CD4-positive, alpha-beta memory T cell (primary cell): ENCODE measurements at regions of chr3 and their contacts with region 1.

Region 1: DNA sequence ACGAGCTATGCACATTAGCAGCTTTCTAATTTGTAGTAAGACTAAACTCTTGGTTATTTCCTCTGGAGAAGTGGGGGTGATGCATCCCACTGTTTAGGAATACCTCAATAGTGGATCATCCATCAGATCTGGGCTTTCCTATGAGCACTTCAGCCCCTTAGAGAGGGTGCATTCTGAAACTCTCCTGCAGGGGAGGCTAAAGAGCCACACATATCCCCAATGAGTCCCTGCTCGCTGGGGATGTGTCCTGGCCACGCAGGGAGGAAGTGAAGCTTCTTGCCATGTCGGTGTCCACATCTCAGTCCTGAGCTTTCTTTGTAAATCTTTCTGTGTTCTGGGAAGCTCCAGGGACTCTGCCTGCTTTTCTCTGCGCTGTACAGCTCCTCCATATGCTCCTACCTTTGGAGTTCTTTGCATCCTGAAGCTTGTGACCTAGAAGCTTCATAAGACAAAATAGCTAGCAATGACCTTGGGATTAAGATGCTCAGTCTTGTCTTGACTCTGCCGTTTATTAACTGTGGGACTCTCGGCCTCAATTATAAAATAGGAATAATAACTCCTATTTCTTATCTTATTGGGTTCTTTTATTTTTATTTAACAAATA is 28.3 kb upstream of the MASP1 start:
- DNase-seq: peak; percentile 35 to 56 (median 44)
- H3K4me3 ChIP-seq: no peak overlapping the region
- H3K4me3 Mint-ChIP-seq: peak overlapping the region in 1 of 8 donors; percentile 36
- H3K27ac ChIP-seq: no peak overlapping the region
- H3K27ac Mint-ChIP-seq: no peak overlapping the region
- H3K4me1 ChIP-seq: peaks cover 15% of the 10 kb centered on the region
- H3K4me1 Mint-ChIP-seq: peaks cover 9 to 17% (median 14%) of the 10 kb centered on the region in 4 donors
- H3K27me3 ChIP-seq: no peaks in the 10 kb centered on the region
- H3K27me3 Mint-ChIP-seq: peaks cover 21 to 35% of the 10 kb centered on the region in 2 donors

Region 2: GRCh38 chr3:186452517-186452916 is 867.3 kb before region 1 on chr3:
- CTCF ChIA-PET with region 1: no interaction called
- POLR2A ChIA-PET with region 1: no interaction called
- intact Hi-C with region 1: no loop called
- DNase-seq: no peak
- H3K4me3 ChIP-seq: no peak overlapping the region
- H3K4me3 Mint-ChIP-seq: no peak overlapping the region
- H3K27ac ChIP-seq: no peak overlapping the region
- H3K27ac Mint-ChIP-seq: peak overlapping the region in 1 of 7 donors; percentile 11
- H3K4me1 ChIP-seq: no peaks in the 10 kb centered on the region
- H3K4me1 Mint-ChIP-seq: no peaks in the 10 kb centered on the region
- H3K27me3 ChIP-seq: no peaks in the 10 kb centered on the region
- H3K27me3 Mint-ChIP-seq: peaks cover 2% of the 10 kb centered on the region in 2 donors

Region 3: DNA sequence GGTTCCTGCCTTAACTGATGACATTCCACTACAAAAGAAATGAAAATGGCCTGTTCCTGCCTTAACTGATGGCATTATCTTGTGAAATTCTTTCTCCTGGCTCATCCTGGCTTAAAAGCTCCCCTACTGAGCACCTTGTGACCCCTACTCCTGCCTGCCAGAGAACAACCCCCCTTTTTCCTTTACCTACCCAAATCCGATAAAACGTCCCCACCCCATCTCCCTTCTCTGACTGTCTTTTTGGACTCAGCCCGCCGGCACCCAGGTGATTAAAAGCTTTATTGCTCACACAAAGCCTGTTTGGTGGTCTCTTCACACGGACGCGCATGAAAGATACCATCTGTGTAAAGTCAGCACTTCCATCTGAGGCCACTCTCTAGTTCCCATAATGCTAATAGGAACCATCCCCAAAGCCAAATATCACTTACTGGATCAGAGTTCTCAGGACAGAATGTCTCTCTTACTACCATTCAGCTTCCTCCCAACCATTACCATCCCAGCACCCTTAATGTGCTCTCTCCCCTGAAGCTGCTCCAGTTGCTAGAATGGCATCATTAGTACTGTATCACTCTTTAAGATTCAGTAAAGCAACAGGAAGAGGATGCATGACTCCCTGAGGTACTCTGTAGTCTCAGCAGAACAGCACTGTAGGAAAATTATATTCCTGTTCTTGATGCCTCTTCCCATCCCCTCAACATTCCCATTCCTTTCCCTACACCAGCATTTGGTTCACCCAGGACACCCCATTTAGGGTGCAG is 656.3 kb before region 1 on chr3:
- CTCF ChIA-PET with region 1: no interaction called
- POLR2A ChIA-PET with region 1: no interaction called
- intact Hi-C with region 1: no loop called
- DNase-seq: no peak
- H3K4me3 ChIP-seq: no peak overlapping the region
- H3K4me3 Mint-ChIP-seq: no peak overlapping the region
- H3K27ac ChIP-seq: no peak overlapping the region
- H3K27ac Mint-ChIP-seq: no peak overlapping the region
- H3K4me1 ChIP-seq: no peaks in the 10 kb centered on the region
- H3K4me1 Mint-ChIP-seq: peaks cover 0 to 3% (median 0%) of the 10 kb centered on the region in 4 donors
- H3K27me3 ChIP-seq: peaks cover 3% of the 10 kb centered on the region
- H3K27me3 Mint-ChIP-seq: peaks cover 11 to 28% of the 10 kb centered on the region in 2 donors

Region 4: GRCh38 chr3:187112934-187113793 is 206.6 kb before region 1 on chr3:
- CTCF ChIA-PET with region 1: no interaction called
- POLR2A ChIA-PET with region 1: no interaction called
- intact Hi-C with region 1: loop called (anchors 5 kb)
- DNase-seq: peak in 4 of 5 donors; percentile 45 to 54 (median 52)
- H3K4me3 ChIP-seq: no peak overlapping the region
- H3K4me3 Mint-ChIP-seq: no peak overlapping the region
- H3K27ac ChIP-seq: no peak overlapping the region
- H3K27ac Mint-ChIP-seq: no peak overlapping the region
- H3K4me1 ChIP-seq: peaks cover 4% of the 10 kb centered on the region
- H3K4me1 Mint-ChIP-seq: peaks cover 5 to 7% (median 6%) of the 10 kb centered on the region in 4 donors
- H3K27me3 ChIP-seq: no peaks in the 10 kb centered on the region
- H3K27me3 Mint-ChIP-seq: no peaks in the 10 kb centered on the region

Region 5: GRCh38 chr3:187368251-187369088 is 48.7 kb after region 1 on chr3 and contains the start of gene RTP4:
- CTCF ChIA-PET with region 1: interaction called, 24 read pairs
- POLR2A ChIA-PET with region 1: interaction called, 4 read pairs
- intact Hi-C with region 1: no loop called
- DNase-seq: peak; percentile 50 to 70 (median 52)
- H3K4me3 ChIP-seq: peak within 1 kb of the TSS; percentile 85 to 93
- H3K4me3 Mint-ChIP-seq: peak within 1 kb of the TSS; percentile 92 to 99 (median 96)
- H3K27ac ChIP-seq: peak within 1 kb of the TSS; percentile 87
- H3K27ac Mint-ChIP-seq: peak within 1 kb of the TSS; percentile 93 to 99 (median 97)
- H3K4me1 ChIP-seq: peaks cover 24% of the 10 kb centered on the region
- H3K4me1 Mint-ChIP-seq: peaks cover 19 to 50% (median 29%) of the 10 kb centered on the region in 4 donors
- H3K27me3 ChIP-seq: no peaks in the 10 kb centered on the region
- H3K27me3 Mint-ChIP-seq: no peaks in the 10 kb centered on the region
- total RNA-seq, gene RTP4: 7.5 to 8.8 TPM

Region 6: DNA sequence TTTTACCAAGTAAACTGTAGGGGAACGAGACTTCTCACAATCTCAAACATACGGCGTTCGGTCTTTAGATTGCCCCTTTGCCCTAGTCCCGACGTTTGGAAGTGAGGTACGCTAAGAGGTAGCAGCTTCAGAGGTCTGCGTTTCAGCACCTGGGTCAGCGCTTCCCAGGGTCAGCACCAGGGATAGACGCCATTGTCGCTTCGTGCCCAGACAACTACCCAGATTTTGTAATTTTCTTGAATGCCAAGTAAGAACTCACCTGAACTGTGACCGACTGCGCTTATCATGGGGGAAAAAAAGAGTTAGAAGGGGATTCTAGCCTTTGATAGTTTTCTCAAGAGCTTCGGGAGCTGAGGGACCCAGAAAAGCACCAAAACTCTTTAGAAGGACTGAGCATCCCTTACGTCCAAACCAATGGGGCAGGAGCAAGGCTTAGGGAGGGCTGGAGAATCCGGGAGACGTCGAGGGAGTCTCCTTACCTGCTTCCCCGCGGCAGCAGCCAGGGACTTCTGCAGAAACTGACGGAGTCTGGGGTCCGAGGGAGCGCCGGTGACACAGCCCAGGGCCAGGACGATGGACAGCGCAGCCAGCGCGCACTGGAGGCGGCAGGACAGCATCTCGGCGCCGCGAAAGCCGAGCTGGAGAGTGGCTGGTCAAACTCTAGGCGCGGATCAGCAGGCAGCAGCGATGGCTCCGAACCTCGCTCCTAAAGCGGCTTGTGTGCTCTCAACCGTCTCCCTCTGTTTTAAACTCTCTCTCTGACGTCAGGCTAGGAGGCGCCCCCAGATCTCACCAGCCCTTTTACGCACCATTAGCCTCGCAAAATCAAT is 350.1 kb after region 1 on chr3 and contains the start of gene SST:
- CTCF ChIA-PET with region 1: interaction called, 464 read pairs
- POLR2A ChIA-PET with region 1: no interaction called
- intact Hi-C with region 1: no loop called
- DNase-seq: no peak
- H3K4me3 ChIP-seq: no peak within 1 kb of the TSS
- H3K4me3 Mint-ChIP-seq: no peak within 1 kb of the TSS
- H3K27ac ChIP-seq: no peak within 1 kb of the TSS
- H3K27ac Mint-ChIP-seq: no peak within 1 kb of the TSS
- H3K4me1 ChIP-seq: no peaks in the 10 kb centered on the region
- H3K4me1 Mint-ChIP-seq: peaks cover 0 to 3% (median under 1%) of the 10 kb centered on the region in 4 donors
- H3K27me3 ChIP-seq: peaks cover 10% of the 10 kb centered on the region
- H3K27me3 Mint-ChIP-seq: peaks cover 43 to 44% of the 10 kb centered on the region in 2 donors
- total RNA-seq, gene SST: not detected

Region 7: DNA sequence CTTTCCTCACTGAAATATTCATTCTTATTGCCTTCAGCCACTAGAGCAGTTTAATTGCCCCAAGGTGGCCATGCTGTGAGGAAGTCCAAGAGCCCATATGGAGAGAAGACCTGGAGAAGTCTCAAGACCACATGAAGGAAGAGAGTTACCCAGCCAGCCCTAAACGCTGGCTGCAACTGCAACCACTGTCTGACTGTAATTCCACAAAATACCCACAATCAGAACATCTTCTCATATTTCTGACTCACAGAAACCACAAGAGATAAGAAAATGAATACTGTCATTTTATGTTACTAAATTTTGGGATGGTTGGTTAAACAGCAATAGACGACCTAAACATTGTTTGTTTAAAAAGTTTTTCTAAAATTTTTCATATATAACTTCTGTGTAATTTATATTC is 365.1 kb after region 1 on chr3:
- CTCF ChIA-PET with region 1: interaction called, 464 read pairs
- POLR2A ChIA-PET with region 1: interaction called, 10 read pairs
- intact Hi-C with region 1: no loop called
- DNase-seq: no peak
- H3K4me3 ChIP-seq: no peak overlapping the region
- H3K4me3 Mint-ChIP-seq: no peak overlapping the region
- H3K27ac ChIP-seq: no peak overlapping the region
- H3K27ac Mint-ChIP-seq: no peak overlapping the region
- H3K4me1 ChIP-seq: no peaks in the 10 kb centered on the region
- H3K4me1 Mint-ChIP-seq: no peaks in the 10 kb centered on the region
- H3K27me3 ChIP-seq: no peaks in the 10 kb centered on the region
- H3K27me3 Mint-ChIP-seq: peaks cover 18 to 22% of the 10 kb centered on the region in 2 donors

Region 8: GRCh38 chr3:187709155-187709554 is 389.4 kb after region 1 on chr3:
- CTCF ChIA-PET with region 1: interaction called, 159 read pairs
- POLR2A ChIA-PET with region 1: interaction called, 3 read pairs
- intact Hi-C with region 1: loop called (anchors 1 kb)
- DNase-seq: no peak
- H3K4me3 ChIP-seq: no peak overlapping the region
- H3K4me3 Mint-ChIP-seq: no peak overlapping the region
- H3K27ac ChIP-seq: no peak overlapping the region
- H3K27ac Mint-ChIP-seq: no peak overlapping the region
- H3K4me1 ChIP-seq: peaks cover 12% of the 10 kb centered on the region
- H3K4me1 Mint-ChIP-seq: peaks cover 7 to 12% (median 12%) of the 10 kb centered on the region in 4 donors
- H3K27me3 ChIP-seq: no peaks in the 10 kb centered on the region
- H3K27me3 Mint-ChIP-seq: no peaks in the 10 kb centered on the region

Region 9: GRCh38 chr3:187841598-187841959 is 521.8 kb after region 1 on chr3:
- CTCF ChIA-PET with region 1: no interaction called
- POLR2A ChIA-PET with region 1: no interaction called
- intact Hi-C with region 1: no loop called
- DNase-seq: no peak
- H3K4me3 ChIP-seq: no peak overlapping the region
- H3K4me3 Mint-ChIP-seq: no peak overlapping the region
- H3K27ac ChIP-seq: no peak overlapping the region
- H3K27ac Mint-ChIP-seq: no peak overlapping the region
- H3K4me1 ChIP-seq: no peaks in the 10 kb centered on the region
- H3K4me1 Mint-ChIP-seq: no peaks in the 10 kb centered on the region
- H3K27me3 ChIP-seq: no peaks in the 10 kb centered on the region
- H3K27me3 Mint-ChIP-seq: no peaks in the 10 kb centered on the region

Region 10: DNA sequence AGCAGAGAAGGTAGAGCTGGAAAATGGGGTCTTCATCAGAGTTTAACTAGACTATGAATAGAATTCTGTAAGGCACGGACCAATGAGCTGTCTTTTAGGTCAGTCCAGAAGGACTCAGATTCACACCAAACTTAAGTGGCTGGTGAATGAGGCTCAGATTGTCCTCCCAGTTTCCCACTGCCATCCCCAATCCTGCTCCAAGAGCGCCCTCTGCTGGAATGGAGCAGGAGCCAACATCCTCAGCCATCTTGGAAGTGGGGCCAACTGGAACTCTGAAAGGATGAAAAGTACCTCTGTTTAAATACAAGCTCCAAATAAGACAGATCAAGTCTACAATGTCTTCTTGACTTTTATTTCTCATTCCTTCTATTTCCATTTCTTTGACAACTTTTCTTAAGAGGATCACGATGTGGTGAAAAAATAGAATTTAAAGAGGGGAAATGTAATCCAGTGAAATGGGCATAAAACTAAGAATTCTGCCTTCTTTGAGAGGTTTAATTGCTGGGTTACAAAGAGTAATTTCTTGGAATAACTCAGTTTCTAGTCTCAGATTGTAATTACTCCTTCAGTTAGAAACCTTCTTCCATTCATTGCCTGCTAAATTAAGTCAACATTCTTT is 1634.9 kb after region 1 on chr3:
- CTCF ChIA-PET with region 1: interaction called, 17 read pairs
- POLR2A ChIA-PET with region 1: no interaction called
- intact Hi-C with region 1: loop called (anchors 5 kb)
- DNase-seq: peak; percentile 48 to 76 (median 68)
- H3K4me3 ChIP-seq: no peak overlapping the region
- H3K4me3 Mint-ChIP-seq: no peak overlapping the region
- H3K27ac ChIP-seq: no peak overlapping the region
- H3K27ac Mint-ChIP-seq: peak overlapping the region in 1 of 7 donors; percentile 45
- H3K4me1 ChIP-seq: no peaks in the 10 kb centered on the region
- H3K4me1 Mint-ChIP-seq: no peaks in the 10 kb centered on the region
- H3K27me3 ChIP-seq: no peaks in the 10 kb centered on the region
- H3K27me3 Mint-ChIP-seq: no peaks in the 10 kb centered on the region